Mammary epithelial cell (primary cell): ENCODE measurements at regions of chr9 and their contacts with region 1.

Region 1: GRCh38 chr9:126690431-126691350 is 77.0 kb downstream of the LMX1B start:
- DNase-seq: no peak
- H3K4me3 ChIP-seq: no peak overlapping the region
- H3K27ac ChIP-seq: no peak overlapping the region
- H3K4me1 ChIP-seq: peaks cover 14% of the 10 kb centered on the region
- H3K27me3 ChIP-seq: no peaks in the 10 kb centered on the region
- CTCF ChIP-seq: peak; percentile 64 to 83

Region 2: DNA sequence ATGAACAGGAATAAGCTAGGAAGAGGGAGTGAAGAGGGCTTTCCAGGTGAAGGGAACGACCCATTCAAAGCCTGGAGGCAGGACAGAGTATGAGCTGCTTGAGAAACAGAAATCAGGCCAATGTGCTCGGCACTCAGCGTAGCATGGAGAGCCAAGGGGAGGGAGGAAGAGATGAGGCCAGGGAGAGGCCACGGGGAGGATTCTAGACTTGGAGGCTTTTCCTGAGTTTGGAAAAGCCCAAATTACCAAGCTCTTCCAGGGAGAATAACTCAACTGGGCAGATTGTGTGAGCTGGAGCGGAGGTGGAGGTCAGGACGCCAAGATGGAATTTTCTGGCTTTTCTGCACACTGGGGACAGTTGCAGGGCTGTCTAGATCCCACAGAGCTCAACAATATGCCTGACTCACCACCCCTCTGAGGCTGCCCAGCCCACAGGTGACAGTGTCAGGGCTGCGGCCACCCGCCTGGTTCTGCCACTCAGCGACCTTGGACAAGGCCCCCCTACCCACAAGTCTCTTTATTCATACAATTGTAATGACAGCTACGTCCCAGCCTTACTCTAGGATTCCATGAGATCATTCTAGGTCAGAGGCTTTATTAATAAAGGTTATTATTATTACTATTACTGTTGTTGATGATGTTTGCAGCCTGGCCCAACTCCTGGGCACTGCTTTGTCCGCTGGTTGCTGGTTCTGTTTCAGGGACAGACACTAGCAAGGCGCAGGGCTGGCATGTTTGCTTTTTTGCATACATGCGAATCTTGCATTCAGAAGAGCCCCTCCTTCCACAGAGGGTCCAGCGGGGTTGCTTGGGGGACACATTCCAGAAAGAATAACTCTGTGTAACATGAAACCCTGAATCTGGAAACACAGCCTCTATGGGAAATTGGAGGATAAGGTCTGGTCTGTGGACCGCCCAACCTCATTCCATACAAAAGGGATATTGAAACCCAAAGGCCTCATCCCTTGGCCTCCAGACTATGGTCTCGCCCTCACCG is 86.3 kb before region 1 on chr9:
- CTCF ChIA-PET with region 1: no interaction called
- dilution Hi-C with region 1: loop called (anchors 10 kb)
- in situ Hi-C with region 1: loop called in 1 of 2 experiments (anchors 5 kb)
- intact Hi-C with region 1: no loop called
- DNase-seq: no peak
- H3K4me3 ChIP-seq: no peak overlapping the region
- H3K27ac ChIP-seq: no peak overlapping the region
- H3K4me1 ChIP-seq: peaks cover 10% of the 10 kb centered on the region
- H3K27me3 ChIP-seq: no peaks in the 10 kb centered on the region
- CTCF ChIP-seq: no peak

Region 3: DNA sequence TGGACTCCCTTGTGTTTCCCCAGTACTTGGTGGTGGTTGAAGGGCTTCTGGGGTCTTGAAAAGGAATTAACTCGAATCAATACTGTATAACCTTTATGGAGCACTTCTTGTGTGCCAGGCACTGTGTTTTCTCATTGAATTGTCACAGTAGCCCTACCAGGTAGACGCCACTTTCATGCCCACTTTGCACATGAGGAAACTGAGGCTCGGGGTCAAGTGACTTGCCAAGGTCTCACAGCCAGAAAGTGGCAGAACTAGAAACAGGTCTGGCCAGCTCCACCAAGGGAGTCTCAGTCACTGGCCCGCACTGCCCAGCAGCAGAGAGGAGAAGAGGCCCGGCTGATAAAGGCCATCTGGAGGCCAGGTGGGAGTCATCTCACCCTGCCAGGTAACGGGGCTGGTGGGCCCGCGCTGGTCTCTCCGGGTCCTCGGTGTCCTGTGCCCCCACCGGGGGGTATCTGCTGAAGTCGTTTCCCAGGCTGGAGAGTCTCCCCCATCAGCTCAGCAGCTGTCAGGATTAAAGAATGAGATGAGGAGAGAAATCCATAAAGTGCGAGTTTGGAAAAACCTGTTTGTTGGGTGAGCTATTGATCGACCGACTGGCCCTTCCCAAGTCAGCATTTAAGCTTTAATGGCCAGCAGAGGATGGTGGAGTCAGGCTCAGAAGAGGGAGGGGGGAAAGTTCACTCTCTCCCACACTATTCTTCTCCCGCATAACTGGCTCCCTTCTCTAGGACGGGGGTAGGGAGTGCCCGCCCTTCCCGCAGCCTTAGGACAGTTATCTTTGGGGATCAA is 46.8 kb before region 1 on chr9:
- CTCF ChIA-PET with region 1: interaction called, 5 read pairs
- dilution Hi-C with region 1: loop called (anchors 5 kb)
- in situ Hi-C with region 1: no loop called
- intact Hi-C with region 1: no loop called
- DNase-seq: no peak
- H3K4me3 ChIP-seq: no peak overlapping the region
- H3K27ac ChIP-seq: no peak overlapping the region
- H3K4me1 ChIP-seq: no peaks in the 10 kb centered on the region
- H3K27me3 ChIP-seq: no peaks in the 10 kb centered on the region
- CTCF ChIP-seq: no peak

Region 4: GRCh38 chr9:126661521-126662220 is 29.0 kb before region 1 on chr9:
- CTCF ChIA-PET with region 1: interaction called, 5 read pairs
- dilution Hi-C with region 1: loop called (anchors 5 kb)
- in situ Hi-C with region 1: no loop called
- intact Hi-C with region 1: loop called (anchors 1 kb)
- DNase-seq: peak; percentile 87
- H3K4me3 ChIP-seq: no peak overlapping the region
- H3K27ac ChIP-seq: peak overlapping the region; percentile 5
- H3K4me1 ChIP-seq: peaks cover 45% of the 10 kb centered on the region
- H3K27me3 ChIP-seq: no peaks in the 10 kb centered on the region
- CTCF ChIP-seq: peak; percentile 6 to 47

Region 5: DNA sequence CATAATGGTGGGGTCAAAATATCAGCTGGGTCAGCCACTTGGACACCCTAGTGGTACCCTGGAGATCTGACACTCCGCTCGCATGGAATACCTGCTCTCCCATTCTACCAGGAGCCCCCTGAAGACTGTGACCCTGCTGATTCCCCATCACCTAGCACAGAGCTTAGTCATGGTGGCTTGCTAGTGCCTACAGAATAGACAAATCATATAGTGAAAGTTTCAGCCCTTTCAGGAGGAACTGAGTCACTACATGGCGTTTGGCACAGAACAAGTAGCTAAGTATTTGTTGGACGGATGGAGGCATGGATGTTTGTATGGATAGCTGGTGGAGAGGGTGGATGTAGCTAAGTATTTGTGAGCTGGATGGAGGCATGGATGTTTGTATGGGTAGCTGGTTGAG is 11.7 kb before region 1 on chr9:
- CTCF ChIA-PET with region 1: interaction called, 10 read pairs
- dilution Hi-C with region 1: no loop called
- in situ Hi-C with region 1: no loop called
- intact Hi-C with region 1: no loop called
- DNase-seq: no peak
- H3K4me3 ChIP-seq: no peak overlapping the region
- H3K27ac ChIP-seq: no peak overlapping the region
- H3K4me1 ChIP-seq: peaks cover 26% of the 10 kb centered on the region
- H3K27me3 ChIP-seq: no peaks in the 10 kb centered on the region
- CTCF ChIP-seq: no peak